H1 (cell line): ENCODE measurements at regions of chr18 and their contacts with region 1.

Region 1: DNA sequence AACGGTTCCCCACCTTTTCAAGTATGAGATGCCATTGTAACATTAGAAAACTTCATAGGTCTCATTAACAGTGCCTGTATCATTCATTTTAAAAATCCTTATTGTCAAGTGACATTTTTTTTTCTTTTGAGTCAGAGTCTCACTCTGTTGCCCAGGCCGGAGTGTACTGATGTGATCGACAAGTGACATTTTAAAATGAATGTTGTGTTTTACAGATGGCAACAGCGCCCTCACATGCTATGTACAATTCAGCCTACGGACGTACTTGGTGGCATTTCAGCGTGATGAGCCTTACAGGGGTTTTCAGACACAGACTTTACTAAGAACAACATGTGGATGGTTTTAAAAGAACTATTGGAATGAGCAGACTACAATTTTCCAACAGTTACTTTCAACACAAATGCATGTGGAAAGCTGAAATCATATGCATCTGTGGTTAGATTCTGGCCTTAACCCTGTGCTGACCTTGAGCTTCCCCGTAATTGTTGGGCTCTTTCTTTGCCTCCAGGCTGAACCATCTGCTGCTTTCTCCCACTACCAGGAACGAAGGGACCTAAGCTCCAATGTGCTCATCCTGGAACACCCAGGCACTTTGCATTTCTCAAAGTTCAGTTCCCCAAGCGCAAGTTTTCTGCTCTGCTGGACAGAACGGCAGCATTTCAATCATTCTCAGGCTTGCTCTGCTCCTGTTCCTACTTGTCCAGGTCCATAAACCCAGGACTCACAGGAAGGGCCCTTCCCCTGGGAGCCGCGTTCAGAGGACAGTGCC is 119.9 kb upstream of the NDUFV2 start:
- DNase-seq: no peak
- H3K4me3 ChIP-seq: no peak overlapping the region
- H3K27ac ChIP-seq: no peak overlapping the region
- H3K4me1 ChIP-seq: peaks cover under 1 to 11% (median 10%) of the 10 kb centered on the region in 4 experiments
- H3K27me3 ChIP-seq: no peaks in the 10 kb centered on the region
- CTCF ChIP-seq: peak; percentile 43 to 68 (median 63)
- EP300 ChIP-seq: no peak
- POLR2A ChIP-seq: no peak
- RAD21 ChIP-seq: peak; percentile 83 to 90

Region 2: GRCh38 chr18:8696749-8697211 is 285.8 kb before region 1 on chr18:
- CTCF ChIA-PET with region 1: interaction called, 21 read pairs
- POLR2A ChIA-PET with region 1: no interaction called
- DNase-seq: peak in 1 of 2 experiments; percentile 95
- H3K4me3 ChIP-seq: no peak overlapping the region
- H3K27ac ChIP-seq: no peak overlapping the region
- H3K4me1 ChIP-seq: no peaks in the 10 kb centered on the region
- H3K27me3 ChIP-seq: no peaks in the 10 kb centered on the region
- CTCF ChIP-seq: peak; percentile 72 to 82 (median 75)
- EP300 ChIP-seq: no peak
- POLR2A ChIP-seq: no peak
- RAD21 ChIP-seq: peak; percentile 73 to 79

Region 3: DNA sequence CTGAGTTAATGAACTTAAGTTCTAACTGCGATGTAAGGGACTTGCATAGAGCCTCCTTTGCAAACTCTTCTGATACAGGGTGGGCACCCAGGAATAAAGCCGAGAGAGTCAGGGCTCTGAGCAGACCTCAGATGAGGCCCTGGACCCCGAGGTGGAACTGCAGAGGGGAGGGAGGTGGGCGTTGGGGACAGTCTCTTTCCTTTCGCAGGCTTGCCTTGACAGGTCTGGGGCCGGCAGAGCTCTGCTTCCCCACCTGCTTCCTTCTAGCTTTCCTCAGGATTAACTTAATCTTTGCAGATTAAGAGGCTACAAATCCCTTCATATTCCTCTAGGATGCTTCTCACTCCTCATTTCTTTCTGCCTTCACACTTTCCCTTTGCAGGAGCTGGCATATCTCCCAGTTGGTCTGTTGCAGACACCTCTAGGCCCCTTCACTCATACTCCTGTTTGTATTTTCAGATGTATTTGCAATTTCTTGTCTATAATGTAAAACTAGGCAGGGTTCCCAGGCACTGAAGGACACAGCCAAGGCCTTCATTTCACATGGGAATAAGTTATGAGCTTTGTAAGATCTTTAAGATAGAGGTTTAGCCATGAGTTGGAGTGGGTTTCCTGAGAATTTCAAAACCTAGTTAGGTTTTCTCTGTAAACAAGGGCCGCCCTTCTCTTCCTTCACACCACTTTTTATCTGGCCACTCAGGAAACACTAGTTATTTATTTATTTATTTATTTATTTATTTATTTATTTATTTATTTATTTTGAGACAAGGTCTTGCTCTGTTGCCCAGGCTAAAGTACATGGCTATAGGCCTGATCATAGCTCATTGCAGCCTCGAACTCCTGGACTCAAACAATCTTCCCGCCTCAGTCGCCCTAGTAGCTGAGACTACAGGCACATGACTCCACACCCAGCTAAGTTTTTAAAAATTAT is 206.3 kb before region 1 on chr18:
- CTCF ChIA-PET with region 1: interaction called, 12 read pairs
- POLR2A ChIA-PET with region 1: no interaction called
- DNase-seq: no peak
- H3K4me3 ChIP-seq: no peak overlapping the region
- H3K27ac ChIP-seq: no peak overlapping the region
- H3K4me1 ChIP-seq: peaks cover 0 to 9% (median 5%) of the 10 kb centered on the region in 4 experiments
- H3K27me3 ChIP-seq: no peaks in the 10 kb centered on the region
- CTCF ChIP-seq: no peak
- EP300 ChIP-seq: no peak
- POLR2A ChIP-seq: no peak
- RAD21 ChIP-seq: no peak

Region 4: DNA sequence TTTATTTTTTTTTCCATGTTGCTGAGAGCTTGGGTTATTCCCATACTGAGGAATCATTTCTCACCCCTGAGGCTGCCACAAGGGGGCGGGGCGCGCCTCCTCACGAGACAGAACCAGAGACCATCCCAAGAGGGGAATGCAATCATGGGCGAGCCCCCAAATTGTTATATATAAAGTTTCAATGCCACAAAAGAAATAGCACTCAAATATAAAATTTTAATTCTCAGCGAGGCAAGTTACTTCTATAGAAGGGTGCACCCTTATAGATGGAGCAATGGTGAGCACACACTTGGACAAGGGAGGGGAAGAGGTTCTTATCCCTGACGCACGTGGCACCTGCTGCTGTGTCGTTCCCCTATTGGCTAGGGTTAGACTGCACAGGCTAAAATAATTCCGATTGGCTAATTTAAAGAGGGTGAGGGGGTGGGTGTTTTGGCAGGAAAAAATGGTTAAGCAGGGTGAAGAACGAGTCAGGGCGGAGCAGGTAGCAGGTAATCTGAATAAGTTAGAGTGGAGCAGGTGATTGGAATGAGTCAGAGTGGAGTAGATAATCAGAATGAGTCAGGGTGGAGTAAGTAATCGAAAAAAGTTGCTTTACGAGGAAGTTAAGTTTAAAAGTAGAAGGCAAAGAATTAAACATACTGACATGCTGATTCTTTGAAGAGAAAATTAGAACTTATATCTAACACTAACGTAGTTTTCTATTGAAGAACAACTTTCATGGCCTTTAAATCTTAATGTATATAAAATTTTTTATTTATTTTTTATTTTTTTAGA is 99.8 kb before region 1 on chr18:
- CTCF ChIA-PET with region 1: interaction called, 14 read pairs
- POLR2A ChIA-PET with region 1: no interaction called
- DNase-seq: peak; percentile 27 to 83
- H3K4me3 ChIP-seq: no peak overlapping the region
- H3K27ac ChIP-seq: no peak overlapping the region
- H3K4me1 ChIP-seq: no peaks in the 10 kb centered on the region
- H3K27me3 ChIP-seq: no peaks in the 10 kb centered on the region
- CTCF ChIP-seq: peak; percentile 34 to 47 (median 43)
- EP300 ChIP-seq: no peak
- POLR2A ChIP-seq: no peak
- RAD21 ChIP-seq: peak; percentile 57 to 68

Region 5: GRCh38 chr18:8998481-8999217 is 16.0 kb after region 1 on chr18:
- CTCF ChIA-PET with region 1: interaction called, 16 read pairs
- POLR2A ChIA-PET with region 1: no interaction called
- DNase-seq: no peak
- H3K4me3 ChIP-seq: no peak overlapping the region
- H3K27ac ChIP-seq: no peak overlapping the region
- H3K4me1 ChIP-seq: peaks cover 0 to 3% (median 0%) of the 10 kb centered on the region in 4 experiments; a peak in 3 of 7 replicates
- H3K27me3 ChIP-seq: no peaks in the 10 kb centered on the region; a peak in 1 of 7 replicates
- CTCF ChIP-seq: no peak
- EP300 ChIP-seq: no peak
- POLR2A ChIP-seq: no peak
- RAD21 ChIP-seq: no peak